Activated T-helper 1 cell treated with anti-CD3 and anti-CD28 coated beads, Interleukin-12 subunit alpha, Interleukin-12 subunit beta, Interleukin-2, Interleukin-4 antibody, amounts not matched to agents 30 ng/mL and 10 ng/mL and 1 ng/mL, durations not matched to agents 14 hours and 24 hours and 36 hours (primary cell): ENCODE measurements at regions of chr18 and their contacts with region 1.

Region 1: DNA sequence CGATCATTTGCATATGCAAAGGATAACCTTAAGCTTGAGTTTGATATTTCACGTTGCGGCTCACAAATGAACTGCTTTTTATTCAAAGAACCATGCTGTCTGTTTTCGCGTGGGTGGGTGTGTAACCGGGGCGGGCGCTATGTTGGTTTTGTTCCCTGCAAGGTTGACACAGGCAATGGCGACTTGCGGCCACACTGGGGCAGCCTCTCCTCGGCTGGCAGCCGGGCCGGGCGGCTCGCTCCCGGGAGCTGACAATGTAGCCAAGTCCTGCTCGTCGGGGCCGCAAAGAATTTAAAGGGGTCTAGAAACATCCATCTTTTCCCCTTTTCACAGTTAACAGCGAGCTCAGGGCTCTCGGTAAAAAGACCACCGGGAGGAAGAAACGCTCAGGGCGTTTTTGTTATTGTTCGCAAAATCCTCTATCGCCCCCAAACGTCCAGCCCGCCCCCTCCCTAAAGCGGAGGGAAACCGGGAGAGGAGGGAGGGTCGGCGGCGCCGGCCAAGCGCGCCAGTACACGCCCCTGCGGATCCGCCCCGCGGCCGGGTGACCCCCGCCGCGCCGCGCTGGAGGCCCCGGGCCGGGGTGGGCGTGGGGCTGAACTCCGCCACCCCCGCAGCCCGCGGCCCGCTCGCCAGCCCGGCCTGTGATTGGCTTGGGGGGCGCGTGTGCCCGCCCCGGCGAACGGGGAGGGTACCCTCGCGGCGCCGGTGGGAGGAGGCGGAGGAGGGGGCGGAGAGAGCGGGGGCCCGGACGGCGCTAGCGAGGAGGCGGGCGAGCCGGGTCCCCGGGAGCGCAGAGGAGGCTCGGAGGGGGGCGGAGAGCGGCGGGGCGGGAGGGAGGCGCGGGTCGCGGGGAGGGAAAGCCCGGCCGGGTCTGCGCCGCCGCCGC is at the start of gene NEDD4L:
- DNase-seq: peak; percentile 66
- H3K4me3 Mint-ChIP-seq: peak within 1 kb of the TSS; percentile 91
- H3K27ac Mint-ChIP-seq: peak within 1 kb of the TSS; percentile 69
- H3K4me1 Mint-ChIP-seq: peaks cover 29% of the 10 kb centered on the region
- H3K27me3 Mint-ChIP-seq: peaks cover 51% of the 10 kb centered on the region
- total RNA-seq, gene NEDD4L: 3.4 and 3.8 TPM in 2 replicates

Region 2: GRCh38 chr18:57586251-57587049 is 457.3 kb before region 1 on chr18 and contains the start of gene FECH:
- intact Hi-C with region 1: loop called (anchors 1 kb)
- DNase-seq: peak; percentile 77
- H3K4me3 Mint-ChIP-seq: peak within 1 kb of the TSS; percentile 86
- H3K27ac Mint-ChIP-seq: peak within 1 kb of the TSS; percentile 85
- H3K4me1 Mint-ChIP-seq: peaks cover 17% of the 10 kb centered on the region
- H3K27me3 Mint-ChIP-seq: no peaks in the 10 kb centered on the region
- total RNA-seq, gene FECH: 21.7 and 23.5 TPM in 2 replicates

Region 3: DNA sequence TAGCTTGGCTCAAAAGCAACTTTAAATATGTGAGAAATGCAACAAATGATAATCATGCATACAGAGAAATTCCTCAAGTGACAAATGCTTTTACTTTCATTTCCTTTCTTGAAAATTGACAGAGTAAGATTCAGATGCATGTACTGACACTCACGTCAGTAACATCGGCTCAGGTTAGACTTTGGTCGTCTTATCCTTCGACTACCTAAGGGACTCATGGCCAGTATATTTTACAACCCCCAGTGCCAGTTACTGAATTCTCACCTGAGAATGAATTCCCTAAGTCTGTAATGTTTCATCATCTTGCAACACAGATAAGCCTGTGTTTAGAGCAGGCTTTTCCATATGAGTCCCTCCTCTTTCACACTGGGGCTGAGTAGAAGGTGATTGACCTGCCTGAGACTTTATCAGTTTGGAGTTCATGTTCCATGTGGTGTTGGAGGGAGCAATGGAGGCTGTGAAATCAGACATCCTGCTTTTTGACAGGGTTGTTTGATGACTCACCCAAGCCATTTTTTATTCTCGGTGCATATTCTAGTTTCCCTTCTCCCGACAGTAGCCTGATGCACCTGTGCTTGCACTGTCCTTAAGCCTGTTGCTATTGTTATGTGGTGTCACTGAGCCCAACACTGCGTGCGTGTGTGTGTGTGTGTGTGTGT is 210.2 kb before region 1 on chr18:
- intact Hi-C with region 1: loop called (anchors 2 kb)
- DNase-seq: peak; percentile 3
- H3K4me3 Mint-ChIP-seq: peak overlapping the region; percentile 68
- H3K27ac Mint-ChIP-seq: peak overlapping the region; percentile 25
- H3K4me1 Mint-ChIP-seq: peaks cover 34% of the 10 kb centered on the region
- H3K27me3 Mint-ChIP-seq: peaks cover 14% of the 10 kb centered on the region

Region 4: DNA sequence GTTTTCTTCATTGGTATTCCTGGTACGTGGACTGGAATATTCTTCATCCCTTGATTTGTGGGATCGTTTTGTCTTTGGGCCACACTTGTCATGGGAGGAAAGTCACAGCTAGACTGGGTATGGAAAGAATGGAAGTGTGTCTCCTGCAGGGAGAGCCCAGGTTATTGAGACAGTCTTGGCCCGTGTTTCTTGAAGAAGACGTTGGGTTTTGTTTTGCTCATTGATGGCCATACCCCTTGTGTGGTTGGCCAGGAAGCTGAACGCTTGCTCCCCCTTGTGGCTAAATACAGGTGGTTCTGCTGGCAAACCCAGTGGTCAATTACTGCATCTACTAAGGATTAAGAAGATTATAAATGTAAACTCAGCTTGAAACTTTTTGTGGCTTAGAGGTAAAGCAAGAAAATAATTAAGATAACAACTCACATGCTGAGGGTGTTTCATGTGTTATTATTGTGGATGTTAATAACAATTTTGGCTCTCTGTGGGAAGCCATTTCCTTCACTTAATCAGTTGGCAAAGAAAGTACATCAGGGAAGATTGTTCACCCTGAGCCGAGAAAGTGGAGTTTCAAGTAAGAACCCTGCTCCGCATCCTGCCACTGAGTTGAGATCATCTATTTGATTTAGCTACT is 92.1 kb after region 1 on chr18:
- intact Hi-C with region 1: loop called (anchors 1 kb)
- DNase-seq: peak; percentile 20
- H3K4me3 Mint-ChIP-seq: no peak overlapping the region
- H3K27ac Mint-ChIP-seq: no peak overlapping the region
- H3K4me1 Mint-ChIP-seq: peaks cover 10% of the 10 kb centered on the region
- H3K27me3 Mint-ChIP-seq: peaks cover 9% of the 10 kb centered on the region

Region 5: DNA sequence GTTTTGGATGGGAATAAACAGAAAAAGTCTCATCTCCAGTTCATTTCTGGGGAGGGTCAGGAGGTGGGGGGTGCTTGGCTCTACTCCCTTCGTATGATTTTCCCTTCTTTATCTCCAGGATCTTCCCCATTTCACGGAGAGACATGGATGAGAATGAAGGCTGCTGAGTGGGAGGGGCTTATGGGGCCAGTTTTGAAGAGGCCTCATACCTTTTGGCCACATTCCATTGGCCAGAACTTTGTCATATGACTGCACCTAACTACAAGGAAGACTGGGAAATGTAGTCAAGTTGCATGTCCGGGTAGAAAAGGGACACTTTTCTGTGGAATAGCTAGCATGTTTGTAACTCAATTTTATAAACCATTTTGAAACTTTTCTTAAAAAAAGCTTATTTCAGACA is 117.9 kb after region 1 on chr18:
- intact Hi-C with region 1: no loop called
- DNase-seq: no peak
- H3K4me3 Mint-ChIP-seq: no peak overlapping the region
- H3K27ac Mint-ChIP-seq: no peak overlapping the region
- H3K4me1 Mint-ChIP-seq: no peaks in the 10 kb centered on the region
- H3K27me3 Mint-ChIP-seq: peaks cover 1% of the 10 kb centered on the region

Region 6: GRCh38 chr18:58493516-58494253 is 449.9 kb after region 1 on chr18:
- intact Hi-C with region 1: loop called (anchors 5 kb)
- DNase-seq: peak; percentile 57
- H3K4me3 Mint-ChIP-seq: no peak overlapping the region
- H3K27ac Mint-ChIP-seq: no peak overlapping the region
- H3K4me1 Mint-ChIP-seq: peaks cover 12% of the 10 kb centered on the region
- H3K27me3 Mint-ChIP-seq: peaks cover 39% of the 10 kb centered on the region

Region 7: GRCh38 chr18:58768293-58768974 is 724.7 kb after region 1 on chr18:
- intact Hi-C with region 1: loop called (anchors 10 kb)
- DNase-seq: peak; percentile 53
- H3K4me3 Mint-ChIP-seq: no peak overlapping the region
- H3K27ac Mint-ChIP-seq: no peak overlapping the region
- H3K4me1 Mint-ChIP-seq: peaks cover 9% of the 10 kb centered on the region
- H3K27me3 Mint-ChIP-seq: peaks cover 49% of the 10 kb centered on the region